Gastrocnemius medialis (tissue), 4 donors: ENCODE measurements at regions of chr7 and their contacts with region 1.

Region 1: GRCh38 chr7:81469869-81470723 is 299.8 kb downstream of the HGF start:
- DNase-seq: peak; percentile 23 to 40
- ATAC-seq: peak in 1 of 2 donors; percentile 55
- H3K4me3 ChIP-seq: no peak overlapping the region
- H3K27ac ChIP-seq: no peak overlapping the region
- H3K4me1 ChIP-seq: no peaks in the 10 kb centered on the region
- H3K27me3 ChIP-seq: no peaks in the 10 kb centered on the region
- CTCF ChIP-seq: peak; percentile 39 to 65 (median 50)
- POLR2A ChIP-seq: no peak

Region 2: GRCh38 chr7:80410081-80410480 is 1060.0 kb before region 1 on chr7:
- in situ Hi-C with region 1: loop called in 1 of 4 experiments (anchors 25 kb)
- intact Hi-C with region 1: no loop called
- DNase-seq: no peak
- ATAC-seq: no peak
- H3K4me3 ChIP-seq: no peak overlapping the region
- H3K27ac ChIP-seq: no peak overlapping the region
- H3K4me1 ChIP-seq: no peaks in the 10 kb centered on the region
- H3K27me3 ChIP-seq: no peaks in the 10 kb centered on the region
- CTCF ChIP-seq: no peak
- POLR2A ChIP-seq: no peak

Region 3: GRCh38 chr7:80428161-80429054 is 1041.7 kb before region 1 on chr7:
- in situ Hi-C with region 1: loop called in 3 of 4 experiments (anchors 25 kb)
- intact Hi-C with region 1: no loop called
- DNase-seq: peak in 1 of 2 donors; percentile 33
- ATAC-seq: peak; percentile 95 to 97
- H3K4me3 ChIP-seq: peak overlapping the region in 1 of 4 donors; percentile 7
- H3K27ac ChIP-seq: no peak overlapping the region
- H3K4me1 ChIP-seq: no peaks in the 10 kb centered on the region
- H3K27me3 ChIP-seq: no peaks in the 10 kb centered on the region
- CTCF ChIP-seq: peak; percentile 65 to 85 (median 74)
- POLR2A ChIP-seq: no peak

Region 4: GRCh38 chr7:80699045-80699638 is 771.0 kb before region 1 on chr7:
- in situ Hi-C with region 1: loop called in 3 of 4 experiments (anchors 5 to 10 kb)
- intact Hi-C with region 1: loop called (anchors 1 kb)
- DNase-seq: no peak
- ATAC-seq: peak; percentile 65 to 80
- H3K4me3 ChIP-seq: no peak overlapping the region
- H3K27ac ChIP-seq: no peak overlapping the region
- H3K4me1 ChIP-seq: no peaks in the 10 kb centered on the region
- H3K27me3 ChIP-seq: no peaks in the 10 kb centered on the region
- CTCF ChIP-seq: peak; percentile 64 to 74 (median 68)
- POLR2A ChIP-seq: no peak